GM10248 (cell line): ENCODE measurements at regions of chr11 and their contacts with region 1.

Region 1: GRCh38 chr11:110429731-110430266 is at the start of gene FDX1:
- DNase-seq: peak; percentile 83
- CTCF ChIP-seq: peak; percentile 73

Region 2: DNA sequence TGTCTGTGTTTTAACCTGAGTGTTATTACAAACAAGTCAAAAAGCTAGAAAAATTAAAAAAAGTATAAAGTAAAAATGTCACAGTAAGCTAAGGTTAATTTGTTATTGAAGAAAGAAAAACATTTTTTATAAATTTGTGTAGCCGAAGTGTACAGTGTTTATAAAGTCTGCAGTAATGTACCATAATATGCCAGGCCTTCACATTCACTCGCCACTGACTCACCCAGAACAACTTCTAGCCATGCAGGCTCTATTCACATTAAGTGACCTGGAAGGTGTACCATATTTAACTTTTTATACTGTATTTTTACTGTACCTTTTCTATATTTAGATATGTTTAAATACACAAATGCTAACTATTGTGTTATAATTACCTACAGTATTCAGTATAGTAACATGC is 14.7 kb before region 1 on chr11:
- CTCF ChIA-PET with region 1: interaction called, 11 read pairs
- POLR2A ChIA-PET with region 1: no interaction called
- DNase-seq: no peak
- CTCF ChIP-seq: no peak

Region 3: DNA sequence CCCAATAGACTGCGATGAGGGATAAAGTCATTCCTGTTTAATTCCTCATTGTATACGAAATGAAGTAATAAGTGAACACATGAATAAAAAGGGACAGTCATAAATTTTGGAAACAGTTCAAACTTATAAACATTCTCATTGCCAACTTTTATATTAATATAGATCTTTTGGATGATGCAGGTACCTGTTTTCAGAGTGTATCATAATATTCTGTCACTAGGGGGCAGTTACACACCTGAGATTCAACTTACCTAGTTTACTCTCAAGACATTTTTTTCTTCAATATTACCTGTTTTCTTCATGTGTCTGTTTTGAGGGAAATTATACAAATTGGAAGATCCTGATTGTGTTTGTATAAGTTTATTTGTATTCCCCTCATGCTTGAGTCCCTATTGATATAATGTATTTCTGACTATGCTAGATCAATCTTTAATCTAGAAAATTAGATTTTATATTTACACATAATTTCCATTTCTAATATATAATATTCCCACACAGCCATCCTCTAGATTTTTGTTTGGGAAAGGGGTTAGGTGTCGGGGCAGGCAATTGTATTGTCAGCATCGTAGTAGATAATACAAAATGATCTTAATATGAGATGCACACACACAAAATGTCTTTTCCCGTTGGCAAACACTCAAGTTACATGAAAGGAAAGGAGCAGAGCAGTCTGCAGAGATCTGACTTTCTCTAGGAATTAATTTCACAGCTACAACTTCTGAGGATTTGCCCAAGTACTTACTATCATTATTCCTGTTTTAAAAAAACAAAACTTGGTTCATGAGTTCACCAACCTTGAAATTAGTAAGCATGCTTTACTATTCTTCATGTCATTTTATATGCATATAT is 18.3 kb after region 1 on chr11:
- CTCF ChIA-PET with region 1: interaction called, 59 read pairs
- POLR2A ChIA-PET with region 1: no interaction called
- DNase-seq: no peak
- CTCF ChIP-seq: peak; percentile 23

Region 4: DNA sequence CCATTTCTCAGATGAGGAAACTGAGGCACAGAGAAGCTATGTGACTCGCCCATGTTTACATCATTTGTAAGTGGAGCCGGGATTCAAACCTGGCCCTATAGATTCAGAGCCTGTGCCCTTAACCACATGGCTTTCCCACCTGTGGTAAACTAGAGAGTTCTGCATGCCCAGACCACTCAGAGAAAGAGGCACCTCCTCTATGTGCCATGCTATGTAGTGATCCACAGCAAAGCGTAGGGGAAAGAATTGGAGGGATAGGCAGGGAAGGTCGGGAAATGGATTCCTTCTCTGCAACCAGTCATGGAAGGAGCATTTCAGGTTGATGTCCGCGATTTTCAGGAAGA is 800.3 kb after region 1 on chr11:
- CTCF ChIA-PET with region 1: interaction called, 25 read pairs
- POLR2A ChIA-PET with region 1: no interaction called
- DNase-seq: no peak
- CTCF ChIP-seq: no peak